ENCODE measurements at regions of chr1 and their contacts with region 1.

Region 1: GRCh38 chr1:188782219-188782841 is 1695.3 kb downstream of the BRINP3 start:
- DNase-seq: peak; percentile 74
- H3K4me3 Mint-ChIP-seq: no peak overlapping the region
- H3K27ac Mint-ChIP-seq: peak overlapping the region; percentile 57
- H3K4me1 Mint-ChIP-seq: no peaks in the 10 kb centered on the region
- H3K27me3 Mint-ChIP-seq: no peaks in the 10 kb centered on the region
- CTCF ChIP-seq: peak; percentile 74

Region 2: DNA sequence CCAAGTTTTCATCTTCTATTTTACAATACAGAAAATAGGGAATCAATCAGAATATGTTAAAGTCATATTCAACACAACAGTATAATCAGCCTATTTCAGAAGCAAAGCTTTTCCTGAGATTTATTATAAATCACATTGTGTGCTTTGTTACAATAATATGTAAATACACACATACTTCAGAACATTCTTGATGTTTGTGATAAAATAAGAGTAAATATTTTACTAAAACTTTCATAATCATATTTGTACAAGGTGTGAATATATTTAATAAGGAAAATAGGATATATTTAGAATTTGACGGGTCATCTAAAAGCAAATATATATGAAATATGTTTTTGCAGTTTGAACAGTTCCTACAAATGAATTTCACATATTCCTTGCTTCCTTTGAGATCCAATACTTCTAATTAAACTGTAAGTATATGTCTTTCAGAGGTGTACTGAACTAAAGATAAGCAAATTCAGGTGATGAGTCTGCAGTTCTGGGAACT is 99.9 kb before region 1 on chr1:
- CTCF ChIA-PET with region 1: no interaction called
- POLR2A ChIA-PET with region 1: no interaction called
- intact Hi-C with region 1: no loop called
- DNase-seq: no peak
- H3K4me3 Mint-ChIP-seq: no peak overlapping the region
- H3K27ac Mint-ChIP-seq: no peak overlapping the region
- H3K4me1 Mint-ChIP-seq: no peaks in the 10 kb centered on the region
- H3K27me3 Mint-ChIP-seq: no peaks in the 10 kb centered on the region
- CTCF ChIP-seq: no peak

Region 3: DNA sequence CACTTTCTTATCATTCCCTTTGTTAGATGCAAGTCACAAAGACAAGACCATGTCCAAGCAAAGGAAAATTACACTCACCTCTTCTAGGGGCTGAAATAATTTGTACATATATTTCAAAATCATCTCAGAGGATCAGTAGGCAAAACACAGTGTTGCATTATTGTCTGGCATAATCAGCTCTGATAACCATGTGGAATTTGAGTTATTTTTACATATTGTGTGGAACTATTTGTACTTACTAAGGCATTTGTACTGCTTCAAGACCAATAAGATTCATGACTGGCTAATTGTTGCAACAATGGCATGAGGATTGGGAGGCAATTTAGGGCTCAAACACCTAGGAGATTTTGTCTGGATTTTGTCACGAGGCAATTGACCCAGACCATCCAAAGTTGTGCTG is 21.1 kb before region 1 on chr1:
- CTCF ChIA-PET with region 1: interaction called, 11 read pairs
- POLR2A ChIA-PET with region 1: no interaction called
- intact Hi-C with region 1: no loop called
- DNase-seq: no peak
- H3K4me3 Mint-ChIP-seq: no peak overlapping the region
- H3K27ac Mint-ChIP-seq: no peak overlapping the region
- H3K4me1 Mint-ChIP-seq: no peaks in the 10 kb centered on the region
- H3K27me3 Mint-ChIP-seq: no peaks in the 10 kb centered on the region
- CTCF ChIP-seq: no peak

Region 4: GRCh38 chr1:188769181-188769580 is 13.1 kb before region 1 on chr1:
- CTCF ChIA-PET with region 1: interaction called, 12 read pairs
- POLR2A ChIA-PET with region 1: interaction called, 3 read pairs
- intact Hi-C with region 1: no loop called
- DNase-seq: no peak
- H3K4me3 Mint-ChIP-seq: no peak overlapping the region
- H3K27ac Mint-ChIP-seq: no peak overlapping the region
- H3K4me1 Mint-ChIP-seq: no peaks in the 10 kb centered on the region
- H3K27me3 Mint-ChIP-seq: no peaks in the 10 kb centered on the region
- CTCF ChIP-seq: no peak

Region 5: DNA sequence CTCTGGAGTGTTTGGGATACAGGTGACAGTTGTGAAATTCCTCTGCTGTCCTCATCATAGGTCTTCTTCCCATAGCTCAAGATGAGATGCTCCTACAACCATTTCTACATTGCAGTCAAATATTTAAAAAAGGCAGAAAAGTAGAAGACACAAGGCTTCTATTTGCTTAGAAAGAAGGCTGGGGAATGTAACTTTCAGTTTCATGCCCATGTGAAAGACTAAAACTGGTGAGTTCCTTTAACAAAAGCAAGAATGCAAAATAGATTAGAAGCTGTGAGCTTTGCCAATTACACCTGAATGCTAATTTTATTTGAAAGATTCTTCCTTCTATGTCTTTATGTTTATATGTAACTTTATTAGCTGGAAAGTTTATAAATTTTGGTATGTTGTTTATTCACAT is 12.6 kb after region 1 on chr1:
- CTCF ChIA-PET with region 1: interaction called, 14 read pairs
- POLR2A ChIA-PET with region 1: interaction called, 3 read pairs
- intact Hi-C with region 1: no loop called
- DNase-seq: no peak
- H3K4me3 Mint-ChIP-seq: no peak overlapping the region
- H3K27ac Mint-ChIP-seq: no peak overlapping the region
- H3K4me1 Mint-ChIP-seq: no peaks in the 10 kb centered on the region
- H3K27me3 Mint-ChIP-seq: no peaks in the 10 kb centered on the region
- CTCF ChIP-seq: no peak

Region 6: DNA sequence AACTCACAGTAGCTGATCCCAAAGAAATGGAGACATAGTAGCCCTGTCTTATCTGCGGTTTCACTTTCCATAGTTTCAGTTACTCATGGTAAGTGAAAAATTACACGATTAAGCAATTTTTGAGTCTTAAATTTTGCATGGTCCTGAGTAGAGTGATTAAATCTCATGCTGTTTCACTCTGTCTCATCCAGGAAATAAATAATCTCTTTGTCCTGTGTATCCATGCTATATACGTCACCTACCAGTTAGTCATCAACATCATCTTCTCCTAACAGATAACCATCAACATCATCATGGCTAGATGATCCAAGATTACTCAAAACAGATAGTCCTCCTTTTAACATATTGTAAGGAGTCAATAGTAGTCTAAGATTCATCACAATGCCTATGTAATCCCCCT is 106.1 kb after region 1 on chr1:
- CTCF ChIA-PET with region 1: no interaction called
- POLR2A ChIA-PET with region 1: no interaction called
- intact Hi-C with region 1: no loop called
- DNase-seq: no peak
- H3K4me3 Mint-ChIP-seq: no peak overlapping the region
- H3K27ac Mint-ChIP-seq: no peak overlapping the region
- H3K4me1 Mint-ChIP-seq: no peaks in the 10 kb centered on the region
- H3K27me3 Mint-ChIP-seq: no peaks in the 10 kb centered on the region
- CTCF ChIP-seq: no peak

Region 7: GRCh38 chr1:188937965-188938551 is 155.7 kb after region 1 on chr1:
- CTCF ChIA-PET with region 1: interaction called, 4 read pairs
- POLR2A ChIA-PET with region 1: no interaction called
- intact Hi-C with region 1: loop called (anchors 5 kb)
- DNase-seq: peak; percentile 43
- H3K4me3 Mint-ChIP-seq: no peak overlapping the region
- H3K27ac Mint-ChIP-seq: no peak overlapping the region
- H3K4me1 Mint-ChIP-seq: no peaks in the 10 kb centered on the region
- H3K27me3 Mint-ChIP-seq: no peaks in the 10 kb centered on the region
- CTCF ChIP-seq: peak; percentile 46

Region 8: DNA sequence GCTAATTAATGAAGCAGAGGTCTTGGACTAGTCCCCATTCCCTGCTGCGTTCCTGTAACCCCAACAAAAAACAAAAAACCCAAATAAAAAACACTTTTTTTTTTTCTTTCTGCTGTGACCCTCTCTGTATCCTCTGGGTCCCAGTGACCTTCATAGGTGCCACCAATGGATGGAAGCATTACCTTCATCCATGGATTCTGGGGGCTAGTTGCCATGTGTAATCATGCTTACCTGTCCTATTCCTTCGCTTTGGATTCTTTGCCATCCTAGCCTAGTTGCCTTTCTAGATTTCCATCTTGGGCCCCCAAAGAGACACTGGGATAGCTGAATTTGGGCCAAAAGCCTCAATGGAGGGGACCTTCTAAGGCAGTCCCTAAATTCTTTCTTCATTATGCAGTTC is 486.7 kb after region 1 on chr1:
- CTCF ChIA-PET with region 1: no interaction called
- POLR2A ChIA-PET with region 1: no interaction called
- intact Hi-C with region 1: no loop called
- DNase-seq: peak; percentile 56
- H3K4me3 Mint-ChIP-seq: no peak overlapping the region
- H3K27ac Mint-ChIP-seq: no peak overlapping the region
- H3K4me1 Mint-ChIP-seq: no peaks in the 10 kb centered on the region
- H3K27me3 Mint-ChIP-seq: no peaks in the 10 kb centered on the region
- CTCF ChIP-seq: no peak

Region 9: GRCh38 chr1:190320952-190321351 is 1538.6 kb after region 1 on chr1:
- CTCF ChIA-PET with region 1: interaction called, 4 read pairs
- POLR2A ChIA-PET with region 1: no interaction called
- intact Hi-C with region 1: loop called (anchors 5 kb)
- DNase-seq: peak; percentile 64
- H3K4me3 Mint-ChIP-seq: no peak overlapping the region
- H3K27ac Mint-ChIP-seq: no peak overlapping the region
- H3K4me1 Mint-ChIP-seq: no peaks in the 10 kb centered on the region
- H3K27me3 Mint-ChIP-seq: no peaks in the 10 kb centered on the region
- CTCF ChIP-seq: peak; percentile 67

Region 10: GRCh38 chr1:190436615-190437014 is 1654.3 kb after region 1 on chr1:
- CTCF ChIA-PET with region 1: interaction called, 3 read pairs
- POLR2A ChIA-PET with region 1: no interaction called
- intact Hi-C with region 1: loop called (anchors 10 kb)
- DNase-seq: peak; percentile 72
- H3K4me3 Mint-ChIP-seq: no peak overlapping the region
- H3K27ac Mint-ChIP-seq: no peak overlapping the region
- H3K4me1 Mint-ChIP-seq: no peaks in the 10 kb centered on the region
- H3K27me3 Mint-ChIP-seq: no peaks in the 10 kb centered on the region
- CTCF ChIP-seq: peak; percentile 69

Measured in MCF 10A (cell line).